Adrenal gland (tissue), 19 donors: ENCODE measurements at regions of chr6 and their contacts with region 1.

Region 1: DNA sequence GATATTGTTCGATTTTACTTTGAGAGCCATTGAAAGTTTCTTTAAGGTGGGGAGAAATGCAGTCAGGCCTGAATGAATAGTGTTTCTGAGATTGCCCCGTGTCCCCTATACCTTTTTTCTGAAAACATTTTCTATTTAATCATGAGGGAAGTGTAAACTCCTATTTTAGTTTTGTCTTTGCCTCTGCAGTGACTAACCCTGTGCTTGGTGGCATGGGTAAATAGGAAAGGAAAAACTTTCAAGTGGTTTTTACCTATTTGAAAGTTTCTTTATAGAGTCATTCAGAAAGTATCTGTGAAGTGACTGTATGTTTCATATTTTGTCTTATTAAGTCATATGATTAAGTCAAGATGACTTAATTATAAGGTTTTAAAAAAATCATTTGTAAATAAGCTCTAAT is 14.5 kb downstream of the SNRNP48 start:
- DNase-seq: no peak
- H3K4me3 ChIP-seq: no peak overlapping the region
- H3K27ac ChIP-seq: no peak overlapping the region
- H3K4me1 ChIP-seq: peaks cover 3 to 5% of the 10 kb centered on the region in 2 donors
- H3K27me3 ChIP-seq: no peaks in the 10 kb centered on the region
- CTCF ChIP-seq: no peak
- POLR2A ChIP-seq: no peak

Region 2: GRCh38 chr6:7300926-7301325 is 303.6 kb before region 1 on chr6:
- intact Hi-C with region 1: loop called in 1 of 2 experiments (anchors 10 kb)
- DNase-seq: no peak
- H3K4me3 ChIP-seq: no peak overlapping the region
- H3K27ac ChIP-seq: no peak overlapping the region
- H3K4me1 ChIP-seq: no peaks in the 10 kb centered on the region
- H3K27me3 ChIP-seq: no peaks in the 10 kb centered on the region
- CTCF ChIP-seq: no peak
- POLR2A ChIP-seq: no peak